Left lung (tissue), 14 donors: ENCODE measurements at regions of chr20 and their contacts with region 1.

Region 1: GRCh38 chr20:43160941-43161340 is 28.8 kb downstream of the PTPRT start:
- DNase-seq: peak in 1 of 4 donors; percentile 46
- ATAC-seq: no peak
- H3K4me3 ChIP-seq: no peak overlapping the region
- H3K27ac ChIP-seq: no peak overlapping the region
- H3K4me1 ChIP-seq: no peaks in the 10 kb centered on the region
- H3K27me3 ChIP-seq: peaks cover 0 to 11% of the 10 kb centered on the region in 2 donors
- CTCF ChIP-seq: no peak

Region 2: DNA sequence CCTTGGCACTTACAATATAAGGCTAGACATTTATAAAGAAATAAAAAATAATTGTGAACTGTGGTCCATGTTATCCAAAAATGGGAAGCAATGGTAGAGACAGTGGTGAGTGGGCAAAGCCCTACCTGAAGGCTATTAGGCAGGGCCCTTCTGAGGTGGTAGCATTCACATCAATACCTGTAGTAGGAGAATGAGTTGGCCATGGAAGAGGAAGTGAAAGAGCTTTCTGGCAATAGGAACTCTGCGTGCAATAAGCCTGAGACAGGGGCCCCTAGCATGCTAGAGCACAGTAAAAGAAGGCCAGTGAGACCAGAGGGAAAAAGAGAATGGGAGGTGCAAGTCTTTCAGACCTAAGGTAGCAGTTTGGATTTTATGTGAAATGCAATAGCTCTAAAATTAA is 725.7 kb before region 1 on chr20:
- intact Hi-C with region 1: loop called in 1 of 2 experiments (anchors 10 kb)
- DNase-seq: no peak
- ATAC-seq: no peak
- H3K4me3 ChIP-seq: no peak overlapping the region
- H3K27ac ChIP-seq: no peak overlapping the region
- H3K4me1 ChIP-seq: no peaks in the 10 kb centered on the region
- H3K27me3 ChIP-seq: no peaks in the 10 kb centered on the region
- CTCF ChIP-seq: no peak